Right ventricle myocardium superior (tissue), 1 donor: ENCODE measurements at regions of chr7 and their contacts with region 1.

Region 1: GRCh38 chr7:4631664-4632171 is 50.4 kb upstream of the FOXK1 start:
- DNase-seq: peak; percentile 86
- ATAC-seq: peak; percentile 98

Region 2: GRCh38 chr7:4681886-4682620 is 50.3 kb after region 1 on chr7 and contains the start of gene FOXK1:
- intact Hi-C with region 1: no loop called
- DNase-seq: peak; percentile 87
- ATAC-seq: peak; percentile 81
- total RNA-seq, gene FOXK1: 16.8 TPM

Region 3: DNA sequence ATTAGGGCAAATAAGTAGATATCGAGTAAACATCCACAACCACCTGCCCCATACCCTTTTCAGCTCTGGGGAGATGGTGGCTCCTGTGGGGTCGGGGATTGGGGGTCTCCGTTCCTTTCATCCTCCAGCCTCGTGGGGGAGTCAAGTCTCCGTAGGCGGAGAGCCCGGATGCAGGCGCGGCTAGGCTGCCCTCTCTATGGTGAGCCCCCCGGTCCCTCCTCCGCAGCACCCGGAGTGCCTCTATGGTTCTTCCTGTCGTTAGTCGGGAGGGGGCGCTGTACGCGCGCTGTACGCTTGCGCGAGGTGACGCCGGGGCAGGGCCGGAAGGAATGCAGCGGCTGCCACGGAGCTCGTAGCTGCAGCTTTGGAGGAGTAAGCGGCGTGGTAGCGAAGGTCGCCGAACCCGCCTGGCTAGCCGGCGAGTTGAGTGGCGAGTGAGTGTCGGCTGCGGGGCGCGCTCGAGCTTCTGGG is 342.0 kb after region 1 on chr7:
- intact Hi-C with region 1: loop called (anchors 10 kb)
- DNase-seq: peak; percentile 93
- ATAC-seq: peak; percentile 99